A549 (cell line): ENCODE measurements at regions of chr15 and their contacts with region 1.

Region 1: DNA sequence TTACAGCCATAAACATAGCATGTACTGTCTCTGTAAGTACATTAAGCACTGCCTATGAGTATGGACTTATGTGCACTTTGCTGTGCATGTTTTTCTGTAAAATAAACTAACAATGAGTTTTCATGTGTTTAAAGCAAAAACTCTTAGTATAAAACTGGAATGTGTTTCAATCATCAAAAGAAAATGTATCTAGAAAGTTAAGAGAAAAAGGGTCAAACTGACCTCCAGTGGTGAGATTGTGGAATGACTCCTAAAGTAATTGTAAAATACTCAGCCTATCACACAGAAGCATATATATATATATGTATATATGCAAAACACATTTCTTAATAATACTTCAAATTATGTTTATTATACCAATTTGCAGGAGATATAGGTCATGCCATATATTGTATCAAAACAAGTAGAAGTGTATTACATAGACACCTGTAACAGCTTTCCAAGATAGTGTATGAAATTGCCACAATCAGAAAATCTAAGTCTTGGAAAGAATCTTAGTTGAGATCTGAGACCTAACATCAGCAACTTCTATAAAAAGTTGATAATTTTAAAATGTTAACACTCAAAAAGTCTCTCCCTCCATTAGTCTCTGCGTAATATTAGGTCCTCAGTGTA is 199.6 kb downstream of the FMN1 start:
- DNase-seq: peak; percentile 13 to 62
- ATAC-seq: peak; percentile 52 to 82; a peak in 3 of 6 replicates
- H3K4me3 ChIP-seq: no peak overlapping the region
- H3K27ac ChIP-seq: peak overlapping the region in 1 of 2 experiments; percentile 38; a peak in 3 of 6 replicates
- H3K4me1 ChIP-seq: no peaks in the 10 kb centered on the region
- CTCF ChIP-seq: peak; percentile 95
- EP300 ChIP-seq: no peak
- POLR2A ChIP-seq: no peak
- RAD21 ChIP-seq: peak; percentile 89 to 95

Region 2: DNA sequence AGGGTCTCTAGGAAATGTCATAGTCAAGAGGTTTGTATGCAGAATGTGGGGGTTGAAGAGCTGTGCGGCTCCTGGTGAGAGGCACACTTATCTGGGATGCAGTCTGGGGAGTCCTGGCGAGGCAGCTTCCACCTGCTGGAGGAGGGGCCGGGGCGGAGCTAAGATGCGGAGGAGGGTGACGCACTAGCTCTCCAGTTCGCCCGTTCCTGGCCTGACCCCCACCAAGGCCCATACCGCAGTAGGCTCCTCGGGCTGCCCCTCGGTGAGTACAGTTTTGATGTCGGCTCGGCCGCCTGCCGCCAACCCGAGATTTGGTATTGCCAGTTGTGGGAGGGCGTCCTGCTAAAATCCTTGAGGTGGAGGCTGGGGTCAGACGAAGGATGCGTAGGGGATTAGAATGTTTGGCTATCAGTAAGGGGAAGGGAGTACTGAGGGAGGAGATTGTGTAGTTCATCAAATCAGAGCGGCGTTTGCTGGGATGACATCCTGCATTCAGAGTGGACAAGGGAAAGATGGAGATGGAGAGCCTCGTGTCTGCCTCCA is 353.3 kb before region 1 on chr15 and contains the start of gene SCG5:
- CTCF ChIA-PET with region 1: interaction called, 14 read pairs
- POLR2A ChIA-PET with region 1: no interaction called
- DNase-seq: no peak
- ATAC-seq: peak in 1 of 2 experiments; percentile 43; a peak in 3 of 6 replicates
- H3K4me3 ChIP-seq: no peak within 1 kb of the TSS
- H3K27ac ChIP-seq: no peak within 1 kb of the TSS
- H3K4me1 ChIP-seq: peaks cover 7% of the 10 kb centered on the region; the same call in 1 of the 3 replicates
- CTCF ChIP-seq: no peak
- EP300 ChIP-seq: no peak
- POLR2A ChIP-seq: no peak
- RAD21 ChIP-seq: no peak
- polyA plus RNA-seq, gene SCG5: 9.4 and 10.5 TPM in 2 replicates

Region 3: GRCh38 chr15:32651229-32651837 is 343.6 kb before region 1 on chr15:
- CTCF ChIA-PET with region 1: interaction called, 374 read pairs
- POLR2A ChIA-PET with region 1: no interaction called
- DNase-seq: peak; percentile 76 to 80
- ATAC-seq: peak; percentile 92 to 96
- H3K4me3 ChIP-seq: no peak overlapping the region
- H3K27ac ChIP-seq: peak overlapping the region in 1 of 2 experiments; percentile 9; a peak in 2 of 6 replicates
- H3K4me1 ChIP-seq: peaks cover 7% of the 10 kb centered on the region; the same call in 1 of the 3 replicates
- CTCF ChIP-seq: peak; percentile 88
- EP300 ChIP-seq: no peak
- POLR2A ChIP-seq: no peak
- RAD21 ChIP-seq: peak; percentile 88 to 92

Region 4: GRCh38 chr15:32802286-32802936 is 192.5 kb before region 1 on chr15:
- CTCF ChIA-PET with region 1: interaction called, 13 read pairs
- POLR2A ChIA-PET with region 1: no interaction called
- DNase-seq: no peak
- ATAC-seq: no peak
- H3K4me3 ChIP-seq: no peak overlapping the region
- H3K27ac ChIP-seq: no peak overlapping the region
- H3K4me1 ChIP-seq: 0 out of 3 replicates have a peak, but pooled peaks cover 6% of the 10 kb centered on the region
- CTCF ChIP-seq: no peak
- EP300 ChIP-seq: no peak
- POLR2A ChIP-seq: no peak
- RAD21 ChIP-seq: no peak

Region 5: GRCh38 chr15:32844118-32844711 is 150.7 kb before region 1 on chr15:
- CTCF ChIA-PET with region 1: interaction called, 44 read pairs
- POLR2A ChIA-PET with region 1: no interaction called
- DNase-seq: peak; percentile 40 to 69
- ATAC-seq: peak in 1 of 2 experiments; percentile 62; a peak in 3 of 6 replicates
- H3K4me3 ChIP-seq: no peak overlapping the region
- H3K27ac ChIP-seq: peak overlapping the region in 1 of 2 experiments; percentile 41; a peak in 1 of 6 replicates
- H3K4me1 ChIP-seq: peaks cover 26% of the 10 kb centered on the region
- CTCF ChIP-seq: peak; percentile 77
- EP300 ChIP-seq: no peak
- POLR2A ChIP-seq: no peak
- RAD21 ChIP-seq: peak; percentile 73 to 78

Region 6: DNA sequence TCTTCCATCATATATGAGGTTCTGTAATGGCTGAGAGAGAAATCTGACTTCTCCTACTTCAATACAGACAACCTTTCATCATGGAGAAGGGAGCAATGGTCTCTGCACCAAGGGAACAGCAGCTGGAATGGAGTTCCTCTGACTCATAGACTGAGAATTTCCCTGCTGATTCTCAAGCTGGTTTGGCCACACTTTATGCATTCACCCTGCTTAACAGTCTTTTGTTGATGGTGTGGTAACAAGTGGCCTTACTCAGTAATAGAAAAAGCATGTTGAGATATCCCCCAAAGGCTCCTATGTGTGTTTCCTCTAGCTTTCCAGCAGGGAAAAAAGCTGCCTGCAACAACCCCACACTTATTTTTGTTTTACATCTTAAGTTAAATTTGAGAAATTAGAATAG is 139.0 kb before region 1 on chr15:
- CTCF ChIA-PET with region 1: interaction called, 13 read pairs
- POLR2A ChIA-PET with region 1: no interaction called
- DNase-seq: peak; percentile 65 to 93
- ATAC-seq: peak; percentile 93 to 96
- H3K4me3 ChIP-seq: no peak overlapping the region
- H3K27ac ChIP-seq: peak overlapping the region; percentile 79 to 86
- H3K4me1 ChIP-seq: peaks cover 61% of the 10 kb centered on the region
- CTCF ChIP-seq: no peak
- EP300 ChIP-seq: peak; percentile 63 to 65; a peak in 2 of 5 replicates
- POLR2A ChIP-seq: no peak
- RAD21 ChIP-seq: peak in 1 of 2 experiments; percentile 37; a peak in 2 of 5 replicates

Region 7: GRCh38 chr15:32970847-32971246 is 24.1 kb before region 1 on chr15:
- CTCF ChIA-PET with region 1: interaction called, 10 read pairs
- POLR2A ChIA-PET with region 1: no interaction called
- DNase-seq: no peak
- ATAC-seq: no peak
- H3K4me3 ChIP-seq: no peak overlapping the region
- H3K27ac ChIP-seq: no peak overlapping the region
- H3K4me1 ChIP-seq: no peaks in the 10 kb centered on the region
- CTCF ChIP-seq: no peak
- EP300 ChIP-seq: no peak
- POLR2A ChIP-seq: no peak
- RAD21 ChIP-seq: no peak

Region 8: DNA sequence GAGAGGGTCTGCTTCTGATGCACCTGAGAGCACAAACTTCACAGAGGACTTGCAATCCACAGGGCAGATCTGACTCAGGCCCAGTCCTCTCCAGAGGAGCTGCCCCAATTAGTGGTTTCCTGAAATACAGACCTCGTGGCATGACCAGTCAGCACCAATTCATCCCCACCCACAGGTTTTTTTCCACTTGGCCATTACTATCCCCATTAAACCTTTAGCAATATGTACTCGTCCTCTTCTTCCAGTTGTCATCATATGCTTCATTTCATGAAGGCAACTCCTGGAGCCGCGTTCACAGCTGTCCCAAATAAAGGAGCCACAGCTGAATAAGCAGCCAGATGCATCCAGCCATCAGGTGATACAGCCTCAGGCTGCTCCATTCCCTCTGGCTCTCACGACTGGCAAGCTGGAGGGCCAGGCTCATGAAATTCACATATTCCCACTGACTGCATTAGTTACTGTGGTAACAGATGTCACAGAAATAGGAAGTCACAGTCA is 36.5 kb after region 1 on chr15:
- CTCF ChIA-PET with region 1: no interaction called
- POLR2A ChIA-PET with region 1: no interaction called
- DNase-seq: no peak
- ATAC-seq: no peak
- H3K4me3 ChIP-seq: no peak overlapping the region
- H3K27ac ChIP-seq: no peak overlapping the region
- H3K4me1 ChIP-seq: no peaks in the 10 kb centered on the region
- CTCF ChIP-seq: no peak
- EP300 ChIP-seq: no peak
- POLR2A ChIP-seq: no peak
- RAD21 ChIP-seq: no peak

Region 9: DNA sequence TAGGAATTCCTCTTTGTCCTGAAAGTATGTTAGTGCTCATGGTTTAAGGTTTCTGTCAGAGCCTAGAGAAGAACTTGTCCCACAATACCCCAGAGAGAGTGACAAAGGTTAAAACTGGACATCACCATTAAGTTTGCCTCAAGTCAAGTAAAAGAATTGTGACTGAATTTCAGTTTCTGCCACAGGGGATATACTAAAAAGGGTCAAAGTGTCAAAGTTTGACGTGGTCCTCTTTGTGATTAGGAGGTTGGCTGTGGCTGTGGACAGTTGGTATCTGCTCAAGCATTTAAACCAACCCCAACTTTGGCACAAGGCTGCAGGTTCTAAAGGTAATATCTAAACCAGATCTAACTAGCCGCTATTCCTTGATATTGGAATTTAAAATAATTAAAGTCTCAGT is 173.5 kb after region 1 on chr15:
- CTCF ChIA-PET with region 1: no interaction called
- POLR2A ChIA-PET with region 1: no interaction called
- DNase-seq: no peak
- ATAC-seq: no peak
- H3K4me3 ChIP-seq: no peak overlapping the region
- H3K27ac ChIP-seq: no peak overlapping the region
- H3K4me1 ChIP-seq: no peaks in the 10 kb centered on the region
- CTCF ChIP-seq: no peak
- EP300 ChIP-seq: no peak
- POLR2A ChIP-seq: no peak
- RAD21 ChIP-seq: no peak